ENCODE measurements at regions of chr11 and their contacts with region 1.

Region 1: GRCh38 chr11:6606471-6607193 is 3.1 kb downstream of the ILK start:
- DNase-seq: peak; percentile 95 to 98
- H3K4me3 ChIP-seq: peak overlapping the region; percentile 83 to 96
- H3K27ac ChIP-seq: peak overlapping the region; percentile 93 to 98
- H3K4me1 ChIP-seq: peaks cover 4 to 74% (median 66%) of the 10 kb centered on the region in 4 donors
- H3K27me3 ChIP-seq: no peaks in the 10 kb centered on the region
- CTCF ChIP-seq: no peak

Region 2: DNA sequence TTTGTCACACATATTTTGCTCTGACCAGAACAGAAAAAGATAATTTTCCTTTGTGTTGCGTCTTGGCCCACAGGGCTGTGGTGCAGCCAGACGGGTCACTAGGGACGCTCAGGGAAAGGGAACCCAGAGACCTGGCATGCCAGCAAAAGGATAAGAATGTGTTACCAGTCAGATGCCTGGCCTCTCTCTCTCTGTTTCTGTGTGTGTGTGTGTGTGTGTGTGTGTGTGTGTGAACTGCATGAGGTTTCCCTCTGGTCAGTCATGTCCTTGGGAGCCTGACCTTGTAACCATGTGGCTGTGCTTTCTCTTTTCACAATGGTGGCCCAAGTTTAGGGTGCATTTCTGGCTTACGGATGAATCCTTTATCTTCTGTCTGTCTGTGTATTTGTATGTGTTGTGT is 321.6 kb before region 1 on chr11:
- intact Hi-C with region 1: no loop called
- DNase-seq: no peak
- H3K4me3 ChIP-seq: no peak overlapping the region
- H3K27ac ChIP-seq: no peak overlapping the region
- H3K4me1 ChIP-seq: no peaks in the 10 kb centered on the region
- H3K27me3 ChIP-seq: peaks cover 0 to 2% of the 10 kb centered on the region in 2 donors
- CTCF ChIP-seq: no peak

Region 3: DNA sequence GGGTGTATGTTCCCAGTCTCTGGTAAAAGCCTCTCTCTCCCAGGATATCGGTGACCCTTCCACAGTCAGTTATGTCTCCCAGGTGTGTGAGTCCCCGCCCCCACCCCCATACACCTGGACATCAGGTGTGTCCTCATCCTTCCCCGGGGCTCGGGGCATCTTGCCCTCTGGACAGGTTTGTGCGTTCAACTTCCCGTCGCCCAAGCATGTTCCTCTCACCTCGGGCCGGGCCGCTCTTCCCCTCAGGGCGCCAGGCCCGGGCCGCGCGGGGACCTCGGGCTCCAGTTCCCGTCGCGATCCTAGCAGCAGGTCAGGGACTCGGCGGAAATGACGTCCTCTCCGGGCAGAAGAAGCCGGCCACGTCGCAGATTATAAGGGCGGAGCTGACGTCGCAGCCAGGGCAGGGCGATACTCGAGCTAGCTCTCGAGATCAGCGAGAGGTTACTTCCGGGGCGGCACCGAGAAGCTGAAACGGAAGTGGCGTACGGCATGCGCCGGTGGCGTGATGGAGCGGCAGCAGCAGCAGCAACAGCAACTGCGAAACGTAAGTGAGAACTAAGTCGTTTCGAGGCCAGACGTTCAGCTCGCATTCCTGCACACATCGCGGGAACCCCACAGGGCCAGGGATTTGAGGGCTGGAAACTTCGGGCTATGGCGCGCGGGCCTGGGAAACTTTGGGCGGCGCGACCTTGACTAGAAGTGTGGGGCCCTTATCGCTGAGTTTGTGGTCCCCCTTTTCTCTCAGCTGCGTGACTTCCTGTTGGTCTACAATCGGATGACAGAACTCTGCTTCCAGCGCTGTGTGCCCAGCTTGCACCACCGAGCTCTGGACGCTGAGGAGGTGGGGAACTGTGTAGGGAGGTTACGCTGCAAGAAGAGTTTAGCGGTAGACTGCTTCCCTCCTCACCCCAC is 125.4 kb before region 1 on chr11 and contains the starts of genes ARFIP2 and TIMM10B:
- intact Hi-C with region 1: loop called (anchors 5 kb)
- DNase-seq: peak; percentile 98 to 99
- H3K4me3 ChIP-seq: peak within 1 kb of the TSS; percentile 73 to 88
- H3K27ac ChIP-seq: peak within 1 kb of the TSS; percentile 88 to 91
- H3K4me1 ChIP-seq: peaks cover 0 to 35% (median 27%) of the 10 kb centered on the region in 4 donors
- H3K27me3 ChIP-seq: no peaks in the 10 kb centered on the region
- CTCF ChIP-seq: no peak